ENCODE measurements at regions of chr1 and their contacts with region 1.

Region 1: GRCh38 chr1:66446261-66447001 is 87.5 kb upstream of the SGIP1 start:
- DNase-seq: peak in 4 of 5 donors; percentile 13 to 70 (median 60)
- H3K4me3 ChIP-seq: peak overlapping the region; percentile 46
- H3K4me3 Mint-ChIP-seq: peak overlapping the region; percentile 8 to 86 (median 67)
- H3K27ac ChIP-seq: no peak overlapping the region
- H3K27ac Mint-ChIP-seq: peak overlapping the region; percentile 43 to 96 (median 90)
- H3K4me1 ChIP-seq: peaks cover 13% of the 10 kb centered on the region
- H3K4me1 Mint-ChIP-seq: peaks cover 18 to 24% (median 21%) of the 10 kb centered on the region in 3 donors
- H3K27me3 ChIP-seq: no peaks in the 10 kb centered on the region
- H3K27me3 Mint-ChIP-seq: peaks cover 2 to 9% of the 10 kb centered on the region in 2 donors

Region 2: GRCh38 chr1:65958561-65959350 is 487.7 kb before region 1 on chr1:
- CTCF ChIA-PET with region 1: interaction called, 60 read pairs
- POLR2A ChIA-PET with region 1: no interaction called
- DNase-seq: peak in 4 of 5 donors; percentile 4 to 56 (median 48)
- H3K4me3 ChIP-seq: no peak overlapping the region
- H3K4me3 Mint-ChIP-seq: no peak overlapping the region
- H3K27ac ChIP-seq: no peak overlapping the region
- H3K27ac Mint-ChIP-seq: no peak overlapping the region
- H3K4me1 ChIP-seq: no peaks in the 10 kb centered on the region
- H3K4me1 Mint-ChIP-seq: no peaks in the 10 kb centered on the region
- H3K27me3 ChIP-seq: no peaks in the 10 kb centered on the region
- H3K27me3 Mint-ChIP-seq: peaks cover 5 to 7% of the 10 kb centered on the region in 2 donors

Region 3: GRCh38 chr1:66265796-66266195 is 180.6 kb before region 1 on chr1:
- CTCF ChIA-PET with region 1: interaction called, 25 read pairs
- POLR2A ChIA-PET with region 1: no interaction called
- DNase-seq: no peak
- H3K4me3 ChIP-seq: no peak overlapping the region
- H3K4me3 Mint-ChIP-seq: no peak overlapping the region
- H3K27ac ChIP-seq: no peak overlapping the region
- H3K27ac Mint-ChIP-seq: peak overlapping the region in 5 of 8 donors; percentile 17 to 67 (median 52)
- H3K4me1 ChIP-seq: peaks cover 13% of the 10 kb centered on the region
- H3K4me1 Mint-ChIP-seq: peaks cover 12 to 42% (median 23%) of the 10 kb centered on the region in 3 donors
- H3K27me3 ChIP-seq: no peaks in the 10 kb centered on the region
- H3K27me3 Mint-ChIP-seq: peaks cover 0 to 2% of the 10 kb centered on the region in 2 donors

Region 4: GRCh38 chr1:66282343-66282852 is 164.0 kb before region 1 on chr1:
- CTCF ChIA-PET with region 1: interaction called, 33 read pairs
- POLR2A ChIA-PET with region 1: no interaction called
- DNase-seq: peak; percentile 12 to 76 (median 57)
- H3K4me3 ChIP-seq: no peak overlapping the region
- H3K4me3 Mint-ChIP-seq: peak overlapping the region in 3 of 7 donors; percentile 2 to 18 (median 6)
- H3K27ac ChIP-seq: no peak overlapping the region
- H3K27ac Mint-ChIP-seq: peak overlapping the region; percentile 50 to 90 (median 86)
- H3K4me1 ChIP-seq: peaks cover 72% of the 10 kb centered on the region
- H3K4me1 Mint-ChIP-seq: peaks cover 70 to 95% (median 94%) of the 10 kb centered on the region in 3 donors
- H3K27me3 ChIP-seq: no peaks in the 10 kb centered on the region
- H3K27me3 Mint-ChIP-seq: no peaks in the 10 kb centered on the region

Region 5: GRCh38 chr1:66371233-66372005 is 75.0 kb before region 1 on chr1:
- CTCF ChIA-PET with region 1: interaction called, 19 read pairs
- POLR2A ChIA-PET with region 1: no interaction called
- DNase-seq: no peak
- H3K4me3 ChIP-seq: no peak overlapping the region
- H3K4me3 Mint-ChIP-seq: peak overlapping the region in 6 of 7 donors; percentile 19 to 59 (median 46)
- H3K27ac ChIP-seq: no peak overlapping the region
- H3K27ac Mint-ChIP-seq: peak overlapping the region; percentile 83 to 99 (median 94)
- H3K4me1 ChIP-seq: peaks cover 68% of the 10 kb centered on the region
- H3K4me1 Mint-ChIP-seq: peaks cover 74 to 93% (median 88%) of the 10 kb centered on the region in 3 donors
- H3K27me3 ChIP-seq: no peaks in the 10 kb centered on the region
- H3K27me3 Mint-ChIP-seq: no peaks in the 10 kb centered on the region

Region 6: DNA sequence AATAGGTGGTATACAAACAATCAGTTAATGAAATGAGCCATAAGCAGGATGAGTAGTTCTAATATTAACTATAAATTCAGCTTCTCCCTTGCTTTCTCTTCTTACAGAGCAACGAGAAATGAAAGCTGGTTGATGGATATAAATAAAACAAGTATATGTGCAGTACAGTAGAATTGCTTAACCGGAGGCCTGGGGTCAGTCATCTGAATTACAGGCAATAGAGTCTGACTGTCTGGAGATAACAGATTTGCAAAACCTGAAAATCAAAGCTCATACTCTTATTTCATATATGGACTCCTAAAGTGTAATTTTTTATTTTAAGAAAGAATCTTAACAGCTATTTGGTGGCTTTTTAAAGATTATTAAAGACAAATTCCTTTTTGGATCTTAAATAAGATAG is 44.4 kb after region 1 on chr1:
- CTCF ChIA-PET with region 1: no interaction called
- POLR2A ChIA-PET with region 1: no interaction called
- DNase-seq: no peak
- H3K4me3 ChIP-seq: no peak overlapping the region
- H3K4me3 Mint-ChIP-seq: no peak overlapping the region
- H3K27ac ChIP-seq: no peak overlapping the region
- H3K27ac Mint-ChIP-seq: no peak overlapping the region
- H3K4me1 ChIP-seq: no peaks in the 10 kb centered on the region
- H3K4me1 Mint-ChIP-seq: no peaks in the 10 kb centered on the region
- H3K27me3 ChIP-seq: no peaks in the 10 kb centered on the region
- H3K27me3 Mint-ChIP-seq: peaks cover 0 to 4% of the 10 kb centered on the region in 2 donors